Activated CD4-positive, alpha-beta T cell treated with anti-CD3 and anti-CD28 coated beads for 36 hours (primary cell): ENCODE measurements at regions of chr11 and their contacts with region 1.

Region 1: GRCh38 chr11:17354601-17354991 is 3.0 kb downstream of the NCR3LG1 start:
- DNase-seq: peak; percentile 76
- ATAC-seq: no peak
- H3K4me3 Mint-ChIP-seq: peak overlapping the region; percentile 77
- H3K27ac Mint-ChIP-seq: no peak overlapping the region
- H3K4me1 Mint-ChIP-seq: peaks cover 35% of the 10 kb centered on the region
- H3K27me3 Mint-ChIP-seq: peaks cover 9% of the 10 kb centered on the region

Region 2: DNA sequence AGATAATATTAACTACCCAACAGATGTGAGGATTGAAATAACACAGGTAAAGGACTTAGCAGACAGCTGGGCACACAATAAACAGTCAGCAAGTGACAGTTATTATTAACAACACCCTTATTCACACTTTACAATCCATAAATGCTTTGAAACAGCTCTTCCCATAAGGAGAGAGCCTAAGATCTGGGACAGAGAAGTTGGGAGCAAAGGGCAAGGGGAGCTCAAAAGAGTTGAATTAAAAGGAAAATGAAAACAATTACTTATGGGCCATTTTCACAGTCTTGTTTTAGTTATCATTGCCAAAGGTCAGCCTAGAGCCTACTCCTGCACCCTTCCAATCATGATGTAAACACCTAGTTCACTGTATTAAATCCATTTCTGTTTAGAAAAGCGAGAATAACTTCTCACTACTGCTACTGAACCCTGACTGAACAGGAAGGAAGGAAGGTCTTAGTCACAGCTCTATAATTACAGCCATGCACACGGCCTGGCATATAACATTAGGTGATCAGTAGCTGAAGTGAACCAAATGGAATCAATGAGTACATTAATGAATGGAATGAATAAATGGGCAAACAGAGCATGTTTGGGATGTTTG is 451.7 kb before region 1 on chr11:
- CTCF ChIA-PET with region 1: interaction called, 3 read pairs
- POLR2A ChIA-PET with region 1: no interaction called
- intact Hi-C with region 1: loop called in 1 of 2 experiments (anchors 2 kb)
- DNase-seq: peak; percentile 39
- ATAC-seq: peak; percentile 85
- H3K4me3 Mint-ChIP-seq: peak overlapping the region; percentile 46
- H3K27ac Mint-ChIP-seq: peak overlapping the region; percentile 98
- H3K4me1 Mint-ChIP-seq: peaks cover 55% of the 10 kb centered on the region
- H3K27me3 Mint-ChIP-seq: no peaks in the 10 kb centered on the region

Region 3: DNA sequence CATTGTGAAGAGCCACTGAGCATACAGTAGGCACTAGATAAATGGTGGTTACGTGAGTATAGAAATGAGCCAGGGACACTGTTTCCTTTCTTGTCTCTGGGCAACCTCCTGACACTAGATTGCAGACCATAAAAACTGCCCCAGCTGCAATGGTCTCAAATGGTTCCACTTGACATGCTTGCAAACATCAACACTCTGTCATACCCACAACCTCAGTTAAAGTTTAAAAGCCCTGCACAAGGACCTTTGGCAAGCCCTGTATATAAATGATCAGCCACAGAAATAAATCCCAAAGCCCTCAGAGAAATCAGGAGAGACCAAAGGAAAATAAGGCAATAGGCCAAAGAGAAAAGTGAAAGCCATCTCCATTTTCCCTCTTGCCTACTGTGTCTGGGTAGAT is 361.1 kb before region 1 on chr11:
- CTCF ChIA-PET with region 1: no interaction called
- POLR2A ChIA-PET with region 1: no interaction called
- intact Hi-C with region 1: no loop called
- DNase-seq: no peak
- ATAC-seq: no peak
- H3K4me3 Mint-ChIP-seq: no peak overlapping the region
- H3K27ac Mint-ChIP-seq: no peak overlapping the region
- H3K4me1 Mint-ChIP-seq: peaks cover 8% of the 10 kb centered on the region
- H3K27me3 Mint-ChIP-seq: no peaks in the 10 kb centered on the region

Region 4: DNA sequence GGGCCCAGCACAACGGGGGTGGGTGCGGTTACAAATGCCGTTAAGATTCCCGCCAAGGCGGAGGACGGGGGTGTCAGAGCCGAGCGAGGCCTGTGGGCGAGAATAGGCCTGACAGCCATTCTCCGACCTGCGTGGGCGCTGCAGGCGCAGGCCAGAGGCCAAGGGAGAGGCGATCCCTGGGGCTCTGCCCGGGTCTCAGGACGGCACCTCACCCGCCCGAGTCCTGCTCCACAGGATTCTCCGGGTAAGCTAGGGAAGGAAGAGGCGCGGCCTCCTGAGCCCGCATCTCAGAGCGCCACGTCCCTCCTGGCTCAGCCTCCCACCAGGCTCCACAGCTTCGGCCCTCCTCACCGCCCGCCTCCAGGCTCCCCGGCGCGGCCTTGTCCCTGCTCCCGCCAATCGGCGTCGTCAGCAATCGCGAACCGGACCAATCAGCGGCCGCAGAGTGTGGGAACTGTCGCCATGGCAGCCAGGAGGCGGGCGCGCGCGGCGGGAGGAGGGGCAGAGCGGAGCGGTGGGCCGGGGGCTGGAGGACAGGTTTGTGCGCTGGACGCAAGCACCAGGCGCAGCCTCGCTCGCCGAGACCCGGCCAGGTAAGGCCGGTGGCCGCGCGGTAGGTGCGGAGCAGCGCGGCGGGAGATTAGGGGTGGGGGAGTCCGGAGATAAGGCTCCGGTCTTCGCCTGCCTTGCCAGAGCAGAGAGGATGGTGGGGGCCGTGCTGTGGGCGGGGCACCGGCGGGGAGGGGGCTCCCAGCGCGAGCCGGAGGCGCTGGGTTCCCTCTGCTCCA is 78.2 kb before region 1 on chr11 and contains the start of gene NUCB2:
- CTCF ChIA-PET with region 1: interaction called, 5 read pairs
- POLR2A ChIA-PET with region 1: no interaction called
- intact Hi-C with region 1: loop called (anchors 1 to 5 kb)
- DNase-seq: peak; percentile 99
- ATAC-seq: peak; percentile 92
- H3K4me3 Mint-ChIP-seq: peak within 1 kb of the TSS; percentile 75
- H3K27ac Mint-ChIP-seq: peak within 1 kb of the TSS; percentile 96
- H3K4me1 Mint-ChIP-seq: peaks cover 36% of the 10 kb centered on the region
- H3K27me3 Mint-ChIP-seq: no peaks in the 10 kb centered on the region
- total RNA-seq, gene NUCB2: 45.0 to 59.9 TPM

Region 5: GRCh38 chr11:17366495-17366894 is 11.9 kb after region 1 on chr11:
- CTCF ChIA-PET with region 1: interaction called, 11 read pairs
- POLR2A ChIA-PET with region 1: interaction called, 5 read pairs
- intact Hi-C with region 1: no loop called
- DNase-seq: no peak
- ATAC-seq: no peak
- H3K4me3 Mint-ChIP-seq: no peak overlapping the region
- H3K27ac Mint-ChIP-seq: no peak overlapping the region
- H3K4me1 Mint-ChIP-seq: no peaks in the 10 kb centered on the region
- H3K27me3 Mint-ChIP-seq: no peaks in the 10 kb centered on the region

Region 6: GRCh38 chr11:17504330-17505107 is 149.9 kb after region 1 on chr11:
- CTCF ChIA-PET with region 1: no interaction called
- POLR2A ChIA-PET with region 1: no interaction called
- intact Hi-C with region 1: loop called in 1 of 2 experiments (anchors 1 kb)
- DNase-seq: peak; percentile 88
- ATAC-seq: peak; percentile 90
- H3K4me3 Mint-ChIP-seq: no peak overlapping the region
- H3K27ac Mint-ChIP-seq: no peak overlapping the region
- H3K4me1 Mint-ChIP-seq: no peaks in the 10 kb centered on the region
- H3K27me3 Mint-ChIP-seq: peaks cover 7% of the 10 kb centered on the region